ENCODE measurements at regions of chr6 and their contacts with region 1.

Region 1: GRCh38 chr6:79600812-79601609 is 30.1 kb upstream of the SH3BGRL2 start:
- DNase-seq: no peak
- ATAC-seq: no peak
- H3K4me3 ChIP-seq: no peak overlapping the region
- H3K27ac ChIP-seq: no peak overlapping the region
- H3K4me1 ChIP-seq: peaks cover 5 to 40% of the 10 kb centered on the region in 2 experiments
- H3K27me3 ChIP-seq: no peaks in the 10 kb centered on the region
- CTCF ChIP-seq: no peak
- EP300 ChIP-seq: no peak
- POLR2A ChIP-seq: no peak
- RAD21 ChIP-seq: no peak

Region 2: DNA sequence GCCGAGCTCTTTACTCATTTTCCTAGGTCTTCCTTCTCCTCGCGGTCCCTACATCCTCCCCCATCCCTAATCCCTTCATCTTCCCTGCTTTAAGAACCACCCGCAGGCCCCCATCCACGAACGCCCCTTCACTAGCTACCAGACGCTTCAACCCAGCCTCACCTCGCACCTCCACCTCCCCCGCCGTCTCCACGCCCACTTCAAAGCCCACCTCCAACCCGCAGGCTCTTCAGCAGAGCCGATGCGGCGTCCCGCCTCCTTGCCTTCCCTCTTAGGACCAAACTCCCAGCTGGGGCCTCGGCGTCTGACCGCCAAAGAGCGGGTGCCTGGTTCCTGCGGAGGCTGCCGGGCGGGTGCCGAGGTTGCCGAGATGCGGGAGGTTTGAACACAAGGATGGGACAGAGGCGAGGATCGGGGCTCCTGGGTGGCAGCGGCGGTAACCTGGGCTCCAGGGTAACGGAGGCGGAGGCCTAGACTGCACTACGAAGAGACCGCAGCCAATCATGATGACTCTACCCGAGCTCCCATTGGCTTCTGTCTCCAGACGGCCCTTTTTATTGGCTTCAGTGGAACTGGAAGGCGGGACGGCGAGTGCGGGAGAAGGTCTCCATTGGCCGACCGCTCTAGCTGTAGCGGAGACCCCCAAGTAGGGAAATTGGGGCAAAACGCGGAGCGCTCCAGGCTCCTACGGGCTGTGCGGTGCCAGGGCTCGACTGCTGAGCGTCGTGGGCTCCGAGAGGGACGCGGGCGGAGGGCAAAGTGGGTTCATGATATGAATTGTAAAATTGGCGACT is 63.9 kb before region 1 on chr6 and contains the start of gene LCA5:
- CTCF ChIA-PET with region 1: no interaction called
- POLR2A ChIA-PET with region 1: interaction called, 5 read pairs
- in situ Hi-C with region 1: no loop called
- intact Hi-C with region 1: loop called (anchors 5 kb)
- DNase-seq: peak; percentile 88 to 97 (median 92)
- ATAC-seq: peak; percentile 95
- H3K4me3 ChIP-seq: peak within 1 kb of the TSS; percentile 82
- H3K27ac ChIP-seq: peak within 1 kb of the TSS; percentile 80
- H3K4me1 ChIP-seq: peaks cover 10% of the 10 kb centered on the region in 2 experiments; a peak in 4 of 5 replicates
- H3K27me3 ChIP-seq: no peaks in the 10 kb centered on the region
- CTCF ChIP-seq: no peak
- EP300 ChIP-seq: no peak
- POLR2A ChIP-seq: peak; percentile 88
- RAD21 ChIP-seq: no peak
- polyA plus RNA-seq, gene LCA5: 1.0 to 1.3 TPM

Region 3: GRCh38 chr6:79630883-79631692 is 30.1 kb after region 1 on chr6 and contains the start of gene SH3BGRL2:
- CTCF ChIA-PET with region 1: no interaction called
- POLR2A ChIA-PET with region 1: interaction called, 13 read pairs
- in situ Hi-C with region 1: no loop called
- intact Hi-C with region 1: no loop called
- DNase-seq: peak; percentile 64 to 89 (median 78)
- ATAC-seq: peak; percentile 97
- H3K4me3 ChIP-seq: peak within 1 kb of the TSS; percentile 74
- H3K27ac ChIP-seq: peak within 1 kb of the TSS; percentile 56
- H3K4me1 ChIP-seq: peaks cover 14 to 19% of the 10 kb centered on the region in 2 experiments; a peak in 4 of 5 replicates
- H3K27me3 ChIP-seq: no peaks in the 10 kb centered on the region
- CTCF ChIP-seq: no peak
- EP300 ChIP-seq: no peak
- POLR2A ChIP-seq: peak; percentile 78
- RAD21 ChIP-seq: no peak
- polyA plus RNA-seq, gene SH3BGRL2: 4.4 to 5.0 TPM

Region 4: DNA sequence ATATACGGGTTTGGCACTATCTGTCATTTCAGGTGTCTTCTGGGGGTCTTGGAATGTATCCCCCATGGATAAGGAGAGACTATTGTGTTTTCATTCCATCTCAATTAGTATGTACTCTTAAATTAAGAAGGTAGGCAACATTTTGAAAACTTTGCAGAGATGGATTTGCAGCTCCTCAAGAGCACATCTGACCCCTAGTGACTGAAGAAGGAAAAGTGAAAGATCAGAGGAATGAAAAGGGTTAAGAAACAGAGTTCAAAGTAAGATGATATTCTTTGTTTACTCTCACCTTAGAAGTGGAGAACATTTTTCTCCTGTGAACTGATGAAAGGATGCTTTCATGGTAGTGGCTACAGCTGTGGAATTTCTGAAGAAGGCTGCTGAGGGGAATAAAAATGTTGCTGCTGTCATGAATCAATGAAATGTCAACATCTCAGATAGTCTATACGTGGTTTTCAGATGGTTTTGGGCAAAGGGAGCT is 71.7 kb after region 1 on chr6:
- CTCF ChIA-PET with region 1: no interaction called
- POLR2A ChIA-PET with region 1: no interaction called
- in situ Hi-C with region 1: no loop called
- intact Hi-C with region 1: loop called (anchors 2 kb)
- DNase-seq: peak in 3 of 4 experiments; percentile 16 to 56 (median 18)
- ATAC-seq: peak; percentile 73
- H3K4me3 ChIP-seq: no peak overlapping the region
- H3K27ac ChIP-seq: no peak overlapping the region
- H3K4me1 ChIP-seq: peaks cover 5 to 10% of the 10 kb centered on the region in 2 experiments; a peak in 3 of 5 replicates
- H3K27me3 ChIP-seq: no peaks in the 10 kb centered on the region
- CTCF ChIP-seq: peak; percentile 32 to 71 (median 60); a peak in 5 of 6 replicates
- EP300 ChIP-seq: no peak
- POLR2A ChIP-seq: no peak
- RAD21 ChIP-seq: peak; percentile 64 to 88

Measured in K562 (cell line).